ENCODE measurements at regions of chr2 and their contacts with region 1.

Region 1: DNA sequence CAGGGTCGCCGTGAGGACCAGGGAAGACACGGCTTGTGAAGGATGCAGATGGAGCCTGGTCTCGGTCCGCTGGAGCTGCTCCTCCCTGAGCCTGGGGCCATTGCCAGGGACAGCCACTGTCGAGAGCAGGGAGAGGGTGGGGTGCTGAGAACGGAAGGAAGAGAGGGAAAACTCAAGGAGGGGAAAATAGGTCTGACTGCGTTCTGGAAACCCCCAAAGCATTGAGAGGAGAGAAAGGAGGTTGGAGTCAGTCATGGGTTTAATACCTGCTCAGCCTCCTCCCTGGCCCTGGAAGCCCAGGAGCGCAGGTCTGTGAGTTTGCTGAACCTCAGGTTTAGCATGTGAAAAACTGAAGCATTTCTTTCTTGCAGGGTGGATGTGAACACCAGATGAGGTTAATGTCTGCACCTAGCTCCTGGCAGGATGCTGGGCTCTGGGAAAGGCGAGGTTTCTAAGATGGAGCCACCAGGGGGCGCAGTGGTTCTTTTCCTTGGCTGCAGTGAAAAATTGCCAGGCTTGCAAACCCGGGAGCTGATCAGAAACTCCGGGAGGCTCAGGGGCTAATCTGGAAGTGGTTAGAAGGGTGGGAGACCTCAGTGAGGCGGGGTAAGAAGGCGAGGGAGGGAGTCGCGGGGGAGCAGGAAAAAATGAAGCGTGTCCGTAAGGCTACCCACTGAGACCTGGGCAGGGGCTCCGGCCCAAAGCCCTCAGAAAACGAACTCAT is 33.6 kb upstream of the RNF149 start:
- DNase-seq: peak; percentile 68
- H3K4me3 ChIP-seq: no peak overlapping the region
- H3K27ac ChIP-seq: no peak overlapping the region
- H3K4me1 ChIP-seq: peaks cover 9% of the 10 kb centered on the region
- H3K27me3 ChIP-seq: no peaks in the 10 kb centered on the region
- CTCF ChIP-seq: peak; percentile 75 to 87
- POLR2A ChIP-seq: no peak

Region 2: DNA sequence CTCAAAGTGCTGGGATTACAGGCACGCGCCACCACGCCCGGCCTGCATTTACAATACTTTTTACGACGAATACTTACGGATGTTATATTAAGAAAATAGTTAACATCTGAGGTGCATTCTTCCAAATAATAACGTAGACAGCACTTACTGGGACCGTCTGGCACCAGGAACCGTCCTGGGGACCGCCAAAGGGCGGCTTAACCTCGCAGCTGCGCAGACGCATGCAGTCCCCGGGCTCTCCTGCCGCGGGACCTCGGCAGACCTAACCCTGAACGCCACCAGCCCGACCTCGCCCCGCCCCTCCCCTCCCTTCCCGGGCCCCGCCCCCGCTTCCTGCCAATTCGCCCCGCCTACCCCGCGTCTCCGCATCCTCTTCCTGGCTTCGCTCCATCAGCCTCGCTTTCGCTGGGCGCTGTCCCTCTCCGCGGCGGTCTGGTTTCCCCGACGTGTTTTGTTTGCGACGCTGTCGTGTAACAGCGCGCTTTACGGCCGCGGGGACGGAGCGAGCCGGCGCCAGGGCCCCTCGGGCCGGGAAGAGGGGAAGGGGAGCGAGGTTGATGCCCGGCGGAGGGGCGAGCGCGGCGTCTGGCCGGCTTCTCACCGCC is 89.6 kb before region 1 on chr2 and contains the start of gene CNOT11:
- CTCF ChIA-PET with region 1: interaction called, 13 read pairs
- POLR2A ChIA-PET with region 1: no interaction called
- dilution Hi-C with region 1: no loop called
- intact Hi-C with region 1: no loop called
- DNase-seq: peak; percentile 99
- H3K4me3 ChIP-seq: peak within 1 kb of the TSS; percentile 65 to 94 (median 88)
- H3K27ac ChIP-seq: peak within 1 kb of the TSS; percentile 89
- H3K4me1 ChIP-seq: peaks cover 18% of the 10 kb centered on the region
- H3K27me3 ChIP-seq: no peaks in the 10 kb centered on the region
- CTCF ChIP-seq: peak; percentile 0 to 8
- POLR2A ChIP-seq: peak; percentile 99
- total RNA-seq, gene CNOT11: 44.3 and 47.7 TPM in 2 replicates

Region 3: DNA sequence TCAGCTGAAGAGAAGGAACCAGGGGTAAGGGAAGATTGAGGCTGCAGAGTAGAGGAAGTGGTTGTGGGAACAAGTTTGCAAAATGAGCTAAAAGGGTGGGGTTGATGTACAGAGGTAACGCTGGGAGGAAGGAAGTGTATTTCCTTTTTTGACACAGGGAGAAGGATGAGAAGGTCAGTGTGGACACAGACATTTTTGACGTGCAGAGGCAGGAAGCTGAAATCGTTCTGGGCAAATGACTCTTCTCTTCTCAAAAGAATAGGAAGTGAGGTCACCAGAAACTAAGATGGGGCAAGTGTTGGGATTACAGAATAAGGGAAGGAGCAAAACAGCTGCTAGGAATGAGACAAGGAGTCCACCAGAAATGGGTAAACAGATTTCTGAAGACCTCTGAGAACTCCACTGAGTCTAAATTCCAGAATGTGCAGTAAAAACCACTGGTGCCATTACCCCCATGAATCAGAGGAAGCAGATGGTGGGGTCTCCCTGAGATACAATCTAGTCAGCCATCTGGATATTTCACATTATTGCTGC is 13.5 kb before region 1 on chr2:
- CTCF ChIA-PET with region 1: interaction called, 51 read pairs
- POLR2A ChIA-PET with region 1: interaction called, 4 read pairs
- dilution Hi-C with region 1: no loop called
- intact Hi-C with region 1: no loop called
- DNase-seq: peak; percentile 98
- H3K4me3 ChIP-seq: peak overlapping the region in 1 of 3 experiments; percentile 1
- H3K27ac ChIP-seq: peak overlapping the region; percentile 95
- H3K4me1 ChIP-seq: peaks cover 37% of the 10 kb centered on the region
- H3K27me3 ChIP-seq: no peaks in the 10 kb centered on the region
- CTCF ChIP-seq: no peak
- POLR2A ChIP-seq: peak; percentile 82

Region 4: DNA sequence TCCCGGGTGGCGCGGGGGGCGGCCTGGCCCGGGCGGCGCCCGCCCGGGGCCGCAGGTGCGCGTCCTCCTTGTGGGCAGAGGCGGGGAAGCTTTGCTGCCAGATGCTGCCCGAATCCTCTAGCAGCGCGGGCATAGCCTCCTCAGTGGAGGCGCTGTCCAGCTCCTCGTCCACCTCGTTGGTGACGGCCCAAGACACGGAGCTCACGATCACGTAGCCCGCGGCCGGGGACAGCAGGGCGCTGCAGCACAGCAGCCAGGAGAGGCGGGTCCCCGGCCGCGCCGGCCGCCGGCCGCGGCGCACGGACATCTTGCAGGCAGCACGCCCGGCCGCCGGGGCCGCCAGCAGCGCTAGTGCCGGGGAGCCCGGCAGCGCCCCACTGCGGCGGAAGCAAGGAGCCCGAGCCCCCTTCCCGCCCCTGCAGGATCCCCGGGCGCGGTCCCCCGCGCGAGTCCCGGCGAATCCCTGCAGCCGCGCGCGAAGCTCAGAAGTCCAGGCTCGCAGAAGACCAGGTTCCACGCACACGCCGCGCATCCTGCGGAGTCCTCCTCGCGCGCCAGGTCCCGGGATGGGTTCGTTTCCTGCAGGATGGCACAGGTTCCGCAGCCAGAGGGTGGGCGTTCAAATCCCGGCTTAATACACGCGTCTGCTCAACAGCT is 45.2 kb after region 1 on chr2 and contains the start of gene CREG2:
- CTCF ChIA-PET with region 1: interaction called, 67 read pairs
- POLR2A ChIA-PET with region 1: no interaction called
- dilution Hi-C with region 1: no loop called
- intact Hi-C with region 1: loop called (anchors 2 kb)
- DNase-seq: peak; percentile 74
- H3K4me3 ChIP-seq: peak within 1 kb of the TSS; percentile 32 to 54 (median 43)
- H3K27ac ChIP-seq: no peak within 1 kb of the TSS
- H3K4me1 ChIP-seq: peaks cover 19% of the 10 kb centered on the region
- H3K27me3 ChIP-seq: peaks cover 36 to 46% of the 10 kb centered on the region in 2 experiments
- CTCF ChIP-seq: peak; percentile 53 to 61
- POLR2A ChIP-seq: no peak
- total RNA-seq, gene CREG2: 0.88 and 2.0 TPM in 2 replicates

Region 5: DNA sequence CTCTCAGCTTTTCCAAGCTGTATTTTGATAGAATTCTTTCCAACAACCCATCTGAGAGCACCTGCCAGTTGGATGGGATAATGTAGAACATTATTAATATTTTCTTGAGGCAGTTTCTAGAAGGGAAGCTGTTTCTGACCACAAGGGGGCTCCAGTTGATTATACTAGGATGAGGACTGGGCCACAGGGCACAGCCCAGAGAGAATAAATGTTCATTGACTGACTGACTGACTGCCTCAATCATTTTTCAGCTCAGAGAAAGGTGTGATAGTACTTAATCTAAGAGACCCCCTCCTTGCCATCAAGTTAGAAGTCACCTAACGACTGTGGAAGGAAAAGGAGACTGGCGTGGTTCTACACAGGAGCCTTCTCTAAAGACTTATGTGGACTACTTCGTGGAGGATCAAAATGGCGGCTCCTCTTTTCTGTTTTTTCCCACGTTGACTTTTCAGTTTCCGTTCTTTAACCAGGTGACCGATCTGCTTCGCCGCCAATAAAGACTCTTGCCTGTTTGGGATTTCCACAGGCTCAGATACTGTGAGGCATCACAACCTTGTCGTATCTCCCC is 77.1 kb after region 1 on chr2:
- CTCF ChIA-PET with region 1: interaction called, 53 read pairs
- POLR2A ChIA-PET with region 1: no interaction called
- dilution Hi-C with region 1: no loop called
- intact Hi-C with region 1: loop called (anchors 1 kb)
- DNase-seq: peak; percentile 69
- H3K4me3 ChIP-seq: no peak overlapping the region
- H3K27ac ChIP-seq: no peak overlapping the region
- H3K4me1 ChIP-seq: no peaks in the 10 kb centered on the region
- H3K27me3 ChIP-seq: no peaks in the 10 kb centered on the region
- CTCF ChIP-seq: peak; percentile 59 to 63
- POLR2A ChIP-seq: no peak

Region 6: DNA sequence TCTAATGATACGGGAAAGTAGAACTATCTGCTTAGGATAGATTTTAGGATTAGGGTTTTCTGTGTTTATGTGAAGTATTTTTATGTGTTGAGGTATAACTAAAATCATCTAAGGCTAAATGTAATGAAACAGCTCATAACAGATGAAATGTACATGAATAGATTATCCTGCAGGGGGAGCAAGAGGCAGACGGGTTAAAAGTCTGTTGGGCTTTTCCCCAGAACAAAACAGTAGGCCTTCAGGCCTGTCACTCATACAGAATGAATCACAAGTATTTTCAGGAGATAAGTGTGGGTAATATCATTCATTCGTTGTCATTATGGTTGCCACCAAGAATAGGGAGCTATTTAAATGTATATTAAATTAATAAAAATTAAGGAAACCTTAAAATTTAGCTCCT is 541.8 kb after region 1 on chr2:
- CTCF ChIA-PET with region 1: interaction called, 5 read pairs
- POLR2A ChIA-PET with region 1: no interaction called
- dilution Hi-C with region 1: no loop called
- intact Hi-C with region 1: loop called (anchors 5 kb)
- DNase-seq: peak; percentile 54
- H3K4me3 ChIP-seq: no peak overlapping the region
- H3K27ac ChIP-seq: no peak overlapping the region
- H3K4me1 ChIP-seq: peaks cover 22% of the 10 kb centered on the region
- H3K27me3 ChIP-seq: no peaks in the 10 kb centered on the region
- CTCF ChIP-seq: peak; percentile 33 to 53
- POLR2A ChIP-seq: no peak